HEK293 (cell line): ENCODE measurements at regions of chr1 and their contacts with region 1.

Region 1: DNA sequence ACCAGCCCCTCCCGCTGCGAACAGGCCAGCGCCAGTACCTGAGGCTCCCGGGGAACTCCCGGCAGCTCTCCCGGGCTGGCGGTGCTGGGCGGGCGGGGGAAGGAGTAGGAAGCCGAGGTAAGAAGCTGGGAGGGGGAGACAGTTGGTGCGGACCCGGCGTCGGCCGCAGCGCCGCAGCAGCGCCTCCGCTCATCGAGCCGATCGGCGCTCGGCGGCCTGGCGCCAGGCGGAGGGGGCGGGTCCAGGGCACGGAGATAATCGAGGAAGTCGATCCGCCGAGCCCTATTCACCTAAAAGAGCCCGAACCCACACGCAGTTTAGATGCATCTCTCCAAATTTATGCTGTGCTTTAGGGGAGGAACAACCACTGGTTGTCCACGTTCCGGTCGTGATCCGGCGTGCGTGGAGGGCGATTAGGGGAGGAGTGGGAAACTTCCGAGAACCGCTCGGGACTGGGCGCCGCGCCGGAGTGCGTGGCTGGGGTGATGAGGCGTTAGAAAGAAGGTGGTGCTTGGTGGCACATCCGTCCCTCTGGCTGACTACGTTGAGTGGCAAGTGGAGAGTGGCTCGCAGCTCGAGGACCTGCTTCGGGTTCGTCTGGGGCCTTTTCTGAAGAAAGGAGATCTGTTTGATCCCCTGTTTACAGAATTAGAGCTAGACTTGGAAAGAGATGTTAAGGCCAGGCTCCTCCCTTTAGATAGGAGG is at the start of gene VAMP4:
- H3K4me3 ChIP-seq: peak within 1 kb of the TSS; percentile 88
- H3K27ac ChIP-seq: peak within 1 kb of the TSS; percentile 81
- H3K4me1 ChIP-seq: no peaks in the 10 kb centered on the region
- CTCF ChIP-seq: peak; percentile 17

Region 2: GRCh38 chr1:171781176-171781875 is 39.3 kb after region 1 on chr1 and contains the start of gene METTL13:
- CTCF ChIA-PET with region 1: no interaction called
- POLR2A ChIA-PET with region 1: interaction called, 11 read pairs
- H3K4me3 ChIP-seq: peak within 1 kb of the TSS; percentile 65
- H3K27ac ChIP-seq: peak within 1 kb of the TSS; percentile 71
- H3K4me1 ChIP-seq: no peaks in the 10 kb centered on the region
- CTCF ChIP-seq: no peak; the same call in 1 of the 2 replicates